ENCODE measurements at regions of chr4 and their contacts with region 1.

Region 1: GRCh38 chr4:189792924-189793618 is 147.6 kb upstream of the FRG1 start:
- DNase-seq: peak; percentile 61
- H3K4me3 Mint-ChIP-seq: no peak overlapping the region
- H3K27ac Mint-ChIP-seq: no peak overlapping the region
- H3K4me1 Mint-ChIP-seq: no peaks in the 10 kb centered on the region
- H3K27me3 Mint-ChIP-seq: no peaks in the 10 kb centered on the region

Region 2: DNA sequence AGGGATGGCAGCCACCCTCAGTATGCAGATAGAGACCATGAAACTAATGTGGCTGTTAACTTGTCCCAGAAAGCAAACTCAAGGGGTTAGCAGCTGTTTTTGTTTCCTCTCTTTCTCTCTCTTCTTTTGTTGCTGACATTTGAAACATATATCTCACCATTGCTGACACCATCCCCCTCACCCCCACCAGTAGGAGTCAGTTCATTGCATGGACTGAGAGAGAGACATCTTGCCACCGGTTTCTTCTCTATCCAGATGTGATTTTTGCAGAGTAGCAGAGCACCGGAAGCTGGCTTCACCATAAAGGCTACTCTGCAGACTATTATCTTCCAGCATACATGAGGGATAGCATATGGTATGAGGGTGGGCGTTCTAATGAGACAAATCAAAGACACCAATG is 29.5 kb before region 1 on chr4:
- CTCF ChIA-PET with region 1: no interaction called
- POLR2A ChIA-PET with region 1: no interaction called
- DNase-seq: no peak
- H3K4me3 Mint-ChIP-seq: no peak overlapping the region
- H3K27ac Mint-ChIP-seq: no peak overlapping the region
- H3K4me1 Mint-ChIP-seq: no peaks in the 10 kb centered on the region
- H3K27me3 Mint-ChIP-seq: no peaks in the 10 kb centered on the region

Region 3: GRCh38 chr4:189780391-189780790 is 12.7 kb before region 1 on chr4:
- CTCF ChIA-PET with region 1: interaction called, 11 read pairs
- POLR2A ChIA-PET with region 1: no interaction called
- DNase-seq: no peak
- H3K4me3 Mint-ChIP-seq: no peak overlapping the region
- H3K27ac Mint-ChIP-seq: no peak overlapping the region
- H3K4me1 Mint-ChIP-seq: no peaks in the 10 kb centered on the region
- H3K27me3 Mint-ChIP-seq: no peaks in the 10 kb centered on the region

Region 4: GRCh38 chr4:189823591-189823990 is 30.5 kb after region 1 on chr4:
- CTCF ChIA-PET with region 1: no interaction called
- POLR2A ChIA-PET with region 1: no interaction called
- DNase-seq: no peak
- H3K4me3 Mint-ChIP-seq: no peak overlapping the region
- H3K27ac Mint-ChIP-seq: no peak overlapping the region
- H3K4me1 Mint-ChIP-seq: no peaks in the 10 kb centered on the region
- H3K27me3 Mint-ChIP-seq: no peaks in the 10 kb centered on the region

Region 5: GRCh38 chr4:189912170-189912569 is 119.1 kb after region 1 on chr4:
- CTCF ChIA-PET with region 1: no interaction called
- POLR2A ChIA-PET with region 1: no interaction called
- DNase-seq: no peak
- H3K4me3 Mint-ChIP-seq: no peak overlapping the region
- H3K27ac Mint-ChIP-seq: no peak overlapping the region
- H3K4me1 Mint-ChIP-seq: no peaks in the 10 kb centered on the region
- H3K27me3 Mint-ChIP-seq: peaks cover 13% of the 10 kb centered on the region

Measured in activated CD4-positive, alpha-beta memory T cell treated with anti-CD3 and anti-CD28 coated beads, Interleukin-2, amount 10 ng/mL, durations not matched to agents 7 days and 5 days (primary cell).